Activated naive CD8-positive, alpha-beta T cell treated with anti-CD3 and anti-CD28 coated beads, Interleukin-2, amount 10 ng/mL, durations not matched to agents 7 days and 5 days (primary cell): ENCODE measurements at regions of chr2 and their contacts with region 1.

Region 1: GRCh38 chr2:74482801-74483674 is at the starts of genes CCDC142 and TTC31:
- DNase-seq: peak; percentile 91
- ATAC-seq: peak; percentile 93
- H3K4me3 Mint-ChIP-seq: peak within 1 kb of the TSS; percentile 99
- H3K27ac Mint-ChIP-seq: peak within 1 kb of the TSS; percentile 99
- H3K4me1 Mint-ChIP-seq: peaks cover 30% of the 10 kb centered on the region
- H3K27me3 Mint-ChIP-seq: no peaks in the 10 kb centered on the region
- total RNA-seq, gene CCDC142: 36.8 to 37.1 TPM
- total RNA-seq, gene TTC31: 44.1 to 46.2 TPM

Region 2: GRCh38 chr2:74421221-74421870 is 61.7 kb before region 1 on chr2 and contains the starts of genes C2orf81 and WDR54:
- POLR2A ChIA-PET with region 1: interaction called, 10 read pairs
- DNase-seq: peak; percentile 99
- ATAC-seq: peak; percentile 80
- H3K4me3 Mint-ChIP-seq: peak within 1 kb of the TSS; percentile 99
- H3K27ac Mint-ChIP-seq: peak within 1 kb of the TSS; percentile 99
- H3K4me1 Mint-ChIP-seq: peaks cover 19% of the 10 kb centered on the region
- H3K27me3 Mint-ChIP-seq: no peaks in the 10 kb centered on the region
- total RNA-seq, gene C2orf81: 3.7 to 5.8 TPM
- total RNA-seq, gene WDR54: 88.9 to 94.4 TPM

Region 3: GRCh38 chr2:74440378-74441169 is 42.5 kb before region 1 on chr2:
- POLR2A ChIA-PET with region 1: no interaction called
- DNase-seq: peak; percentile 61
- ATAC-seq: peak; percentile 82
- H3K4me3 Mint-ChIP-seq: peak overlapping the region; percentile 64
- H3K27ac Mint-ChIP-seq: no peak overlapping the region
- H3K4me1 Mint-ChIP-seq: peaks cover 7% of the 10 kb centered on the region
- H3K27me3 Mint-ChIP-seq: peaks cover 57% of the 10 kb centered on the region

Region 4: DNA sequence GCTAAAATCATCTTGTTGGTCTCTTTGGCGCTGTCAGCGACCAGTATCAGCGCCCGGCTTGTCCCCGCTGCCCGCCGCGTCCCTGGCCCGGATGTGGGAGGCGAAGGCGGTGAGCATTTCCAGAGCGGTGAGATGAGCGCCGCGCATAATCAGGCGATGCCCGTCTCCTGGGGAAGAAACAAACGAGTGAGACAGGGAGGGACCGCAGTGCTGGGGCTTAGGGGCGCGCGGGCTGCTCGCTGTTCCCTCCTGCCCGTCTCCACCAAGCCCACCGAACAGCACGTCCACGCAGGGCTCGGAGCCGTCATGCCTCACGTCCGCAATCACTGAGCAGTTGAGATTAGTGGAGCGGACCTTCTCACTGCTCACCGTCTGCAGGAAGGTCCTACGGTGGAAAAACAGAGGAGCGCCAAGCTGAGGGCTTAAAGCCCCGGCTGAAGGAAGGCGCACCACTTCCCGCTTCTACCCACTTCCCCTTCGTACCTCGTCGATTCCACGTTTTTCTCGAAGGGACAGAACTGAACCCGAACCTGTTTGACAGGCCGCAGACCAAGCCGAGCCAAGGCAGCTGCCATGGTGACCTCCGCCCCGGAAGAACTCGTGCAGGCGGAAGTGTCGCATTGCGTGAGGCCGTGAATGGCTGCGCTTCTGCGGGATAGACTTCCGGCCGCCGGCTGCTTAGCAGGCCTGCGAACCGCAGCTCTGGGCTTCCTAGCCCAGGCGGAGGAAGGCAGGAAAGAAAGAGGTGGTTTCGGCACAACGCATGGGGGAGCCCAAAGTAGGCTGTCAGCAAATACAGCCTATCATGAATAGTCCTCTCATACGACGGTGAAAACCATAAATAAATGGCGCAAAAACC is 10.7 kb before region 1 on chr2 and contains the start of gene MRPL53:
- POLR2A ChIA-PET with region 1: interaction called, 61 read pairs
- DNase-seq: peak; percentile 98
- ATAC-seq: peak; percentile 92
- H3K4me3 Mint-ChIP-seq: peak within 1 kb of the TSS; percentile 93
- H3K27ac Mint-ChIP-seq: peak within 1 kb of the TSS; percentile 91
- H3K4me1 Mint-ChIP-seq: peaks cover 14% of the 10 kb centered on the region
- H3K27me3 Mint-ChIP-seq: no peaks in the 10 kb centered on the region
- total RNA-seq, gene MRPL53: 91.6 to 92.1 TPM

Region 5: GRCh38 chr2:74507145-74507925 is 24.3 kb after region 1 on chr2 and contains the start of gene PCGF1:
- POLR2A ChIA-PET with region 1: interaction called, 19 read pairs
- DNase-seq: peak; percentile 98
- ATAC-seq: peak; percentile 84
- H3K4me3 Mint-ChIP-seq: peak within 1 kb of the TSS; percentile 98
- H3K27ac Mint-ChIP-seq: peak within 1 kb of the TSS; percentile 99
- H3K4me1 Mint-ChIP-seq: peaks cover 32% of the 10 kb centered on the region
- H3K27me3 Mint-ChIP-seq: peaks cover 30% of the 10 kb centered on the region
- total RNA-seq, gene PCGF1: 35.9 to 40.1 TPM

Region 6: DNA sequence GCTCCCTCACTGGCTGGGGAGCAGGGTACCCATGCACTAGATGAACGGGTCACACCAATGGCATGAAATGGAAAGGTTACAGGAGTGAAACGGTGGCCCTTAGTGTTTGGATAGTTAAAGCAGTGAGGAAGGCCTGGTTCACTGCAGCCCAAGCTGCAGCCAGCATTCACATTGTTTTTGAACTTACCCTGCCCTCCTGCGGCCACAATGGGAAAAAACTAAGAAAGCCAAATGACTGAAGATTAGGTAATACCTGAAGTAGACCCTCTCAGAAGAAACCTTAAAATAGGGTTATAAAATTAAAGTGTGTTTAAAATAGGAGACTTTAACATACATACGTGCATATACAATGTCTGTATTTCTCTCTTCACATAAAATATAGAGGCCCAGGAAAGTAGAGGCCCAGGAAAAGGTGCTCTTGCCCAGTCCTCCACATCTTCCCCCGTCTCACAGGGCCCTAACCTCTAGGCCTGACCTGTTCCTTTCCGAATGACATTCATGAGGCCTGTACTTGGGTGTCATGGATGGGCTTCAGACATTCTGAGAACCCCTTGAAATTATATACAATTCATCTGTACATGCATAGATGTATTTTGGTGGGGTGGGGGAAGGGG is 104.7 kb after region 1 on chr2:
- POLR2A ChIA-PET with region 1: interaction called, 27 read pairs
- DNase-seq: peak; percentile 55
- ATAC-seq: peak; percentile 78
- H3K4me3 Mint-ChIP-seq: no peak overlapping the region
- H3K27ac Mint-ChIP-seq: no peak overlapping the region
- H3K4me1 Mint-ChIP-seq: peaks cover 23% of the 10 kb centered on the region
- H3K27me3 Mint-ChIP-seq: peaks cover 28% of the 10 kb centered on the region

Region 7: GRCh38 chr2:74696829-74697228 is 213.8 kb after region 1 on chr2:
- POLR2A ChIA-PET with region 1: no interaction called
- DNase-seq: no peak
- ATAC-seq: no peak
- H3K4me3 Mint-ChIP-seq: no peak overlapping the region
- H3K27ac Mint-ChIP-seq: no peak overlapping the region
- H3K4me1 Mint-ChIP-seq: no peaks in the 10 kb centered on the region
- H3K27me3 Mint-ChIP-seq: peaks cover 18% of the 10 kb centered on the region